ENCODE measurements at regions of chr3 and their contacts with region 1.

Region 1: DNA sequence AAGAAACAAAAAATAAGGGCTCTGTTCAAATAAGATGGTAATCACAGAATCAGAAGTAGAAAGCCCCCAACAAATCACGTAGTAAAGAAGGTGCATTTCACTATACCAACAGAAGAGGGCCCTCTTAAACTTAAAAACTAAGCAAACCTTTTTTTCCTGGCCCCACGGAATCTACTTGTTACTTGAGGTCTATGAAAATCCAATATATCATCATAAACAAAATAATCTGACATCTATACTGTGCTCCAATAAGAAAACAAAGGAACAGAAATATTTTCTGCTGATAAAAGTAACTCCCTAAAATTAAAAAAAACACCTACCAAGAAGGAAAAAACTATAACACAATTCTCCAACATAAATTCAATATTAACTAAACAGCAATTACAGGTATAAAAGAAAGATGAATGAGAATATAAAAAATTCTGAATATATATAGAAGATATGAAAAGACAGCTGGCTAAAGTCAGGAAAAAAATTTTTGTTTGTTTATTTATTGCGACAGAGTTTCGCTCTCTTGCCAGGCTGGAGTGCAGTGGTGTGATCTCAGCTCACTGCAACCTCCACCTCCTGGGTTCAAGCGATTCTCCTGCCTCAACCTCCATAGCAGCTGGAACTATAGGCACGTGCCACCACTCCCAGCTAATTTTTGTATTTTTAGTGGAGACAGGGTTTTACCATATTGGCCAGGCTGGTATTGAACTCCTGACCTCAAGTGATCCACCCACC is 81.8 kb downstream of the CLASP2 start:
- DNase-seq: no peak
- H3K4me3 ChIP-seq: no peak overlapping the region
- H3K27ac ChIP-seq: no peak overlapping the region
- H3K4me1 ChIP-seq: no peaks in the 10 kb centered on the region
- H3K27me3 ChIP-seq: no peaks in the 10 kb centered on the region
- CTCF ChIP-seq: peak in 4 of 6 experiments; percentile 18 to 54 (median 51)
- POLR2A ChIP-seq: no peak

Region 2: DNA sequence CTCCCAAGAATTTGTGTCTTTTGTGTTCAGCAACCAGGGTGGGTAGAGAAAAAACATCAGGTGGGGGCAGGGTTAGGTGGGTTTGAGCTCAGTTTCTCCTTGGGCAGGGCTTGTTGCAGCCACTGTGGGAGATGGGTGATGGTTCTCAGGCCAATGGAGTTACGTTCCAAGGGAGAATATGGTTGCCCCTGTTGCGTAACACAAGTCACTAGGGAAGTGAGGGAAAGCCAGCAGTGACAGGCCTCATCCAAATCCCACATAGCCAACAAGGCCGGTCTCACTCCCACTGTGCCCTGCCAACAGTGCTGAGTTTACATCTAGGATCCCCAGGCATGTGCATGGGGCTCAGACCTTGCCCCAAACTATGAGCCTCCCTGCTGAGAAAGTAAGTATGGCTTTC is 366.9 kb before region 1 on chr3:
- intact Hi-C with region 1: no loop called
- DNase-seq: no peak
- H3K4me3 ChIP-seq: no peak overlapping the region
- H3K27ac ChIP-seq: no peak overlapping the region
- H3K4me1 ChIP-seq: no peaks in the 10 kb centered on the region
- H3K27me3 ChIP-seq: no peaks in the 10 kb centered on the region
- CTCF ChIP-seq: no peak
- POLR2A ChIP-seq: no peak

Region 3: GRCh38 chr3:33787328-33788009 is 151.2 kb after region 1 on chr3:
- intact Hi-C with region 1: loop called (anchors 5 kb)
- DNase-seq: peak; percentile 64 to 67
- H3K4me3 ChIP-seq: no peak overlapping the region
- H3K27ac ChIP-seq: no peak overlapping the region
- H3K4me1 ChIP-seq: peaks cover 0 to 4% of the 10 kb centered on the region in 2 donors
- H3K27me3 ChIP-seq: no peaks in the 10 kb centered on the region
- CTCF ChIP-seq: peak; percentile 37 to 83 (median 66)
- POLR2A ChIP-seq: no peak